Keratinocyte (primary cell): ENCODE measurements at regions of chr10 and their contacts with region 1.

Region 1: GRCh38 chr10:112314822-112315474 is 31.7 kb downstream of the TECTB start:
- DNase-seq: peak; percentile 9
- H3K4me3 ChIP-seq: no peak overlapping the region
- H3K27ac ChIP-seq: no peak overlapping the region
- H3K4me1 ChIP-seq: no peaks in the 10 kb centered on the region
- H3K27me3 ChIP-seq: no peaks in the 10 kb centered on the region
- CTCF ChIP-seq: peak; percentile 76 to 86 (median 85)

Region 2: DNA sequence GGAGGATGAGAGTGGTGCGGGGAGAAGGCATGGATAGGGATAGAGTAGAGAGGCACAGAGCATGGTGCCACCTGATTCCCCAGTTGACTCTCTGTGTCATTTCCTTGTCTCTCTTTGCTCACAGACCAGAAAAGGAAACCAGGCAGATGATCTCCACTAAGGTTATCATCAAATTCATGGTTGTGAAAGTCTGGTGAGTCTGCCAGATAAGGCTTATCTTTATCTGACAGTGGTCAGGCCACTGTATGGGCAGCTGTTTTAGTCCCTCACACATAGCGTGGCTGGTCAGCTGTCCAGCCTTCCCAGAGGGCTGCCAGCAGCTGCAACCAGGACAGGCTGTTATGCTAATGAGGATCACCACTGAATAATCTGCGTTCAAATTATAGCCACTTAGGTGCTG is 1139.2 kb before region 1 on chr10:
- dilution Hi-C with region 1: no loop called
- DNase-seq: no peak
- H3K4me3 ChIP-seq: no peak overlapping the region
- H3K27ac ChIP-seq: no peak overlapping the region
- H3K4me1 ChIP-seq: no peaks in the 10 kb centered on the region
- H3K27me3 ChIP-seq: no peaks in the 10 kb centered on the region
- CTCF ChIP-seq: no peak

Region 3: DNA sequence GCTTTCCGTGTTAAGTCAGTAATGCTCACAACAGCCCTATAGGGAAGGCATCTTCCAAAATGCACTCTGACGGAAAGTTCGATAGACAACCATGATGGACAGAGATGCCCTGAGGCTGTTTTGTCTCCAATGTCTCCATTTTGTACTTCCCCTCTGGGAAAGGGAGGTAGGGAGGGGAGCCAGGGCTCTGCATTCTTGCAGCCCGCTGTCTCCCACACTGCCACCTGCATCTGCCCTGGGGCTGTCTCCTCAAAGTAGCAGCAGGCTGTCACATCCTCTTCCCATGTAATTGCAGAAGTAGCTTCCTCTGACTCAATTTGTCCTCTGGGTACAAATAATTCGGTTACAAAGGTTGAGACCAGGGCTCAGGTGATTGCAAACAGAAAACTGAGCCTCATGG is 262.8 kb before region 1 on chr10:
- dilution Hi-C with region 1: no loop called
- DNase-seq: peak; percentile 40
- H3K4me3 ChIP-seq: no peak overlapping the region
- H3K27ac ChIP-seq: no peak overlapping the region
- H3K4me1 ChIP-seq: peaks cover 6% of the 10 kb centered on the region
- H3K27me3 ChIP-seq: no peaks in the 10 kb centered on the region
- CTCF ChIP-seq: no peak

Region 4: GRCh38 chr10:112140110-112140970 is 174.6 kb before region 1 on chr10:
- dilution Hi-C with region 1: no loop called
- DNase-seq: peak; percentile 40
- H3K4me3 ChIP-seq: no peak overlapping the region
- H3K27ac ChIP-seq: no peak overlapping the region
- H3K4me1 ChIP-seq: no peaks in the 10 kb centered on the region
- H3K27me3 ChIP-seq: no peaks in the 10 kb centered on the region
- CTCF ChIP-seq: peak; percentile 94 to 98 (median 95)

Region 5: DNA sequence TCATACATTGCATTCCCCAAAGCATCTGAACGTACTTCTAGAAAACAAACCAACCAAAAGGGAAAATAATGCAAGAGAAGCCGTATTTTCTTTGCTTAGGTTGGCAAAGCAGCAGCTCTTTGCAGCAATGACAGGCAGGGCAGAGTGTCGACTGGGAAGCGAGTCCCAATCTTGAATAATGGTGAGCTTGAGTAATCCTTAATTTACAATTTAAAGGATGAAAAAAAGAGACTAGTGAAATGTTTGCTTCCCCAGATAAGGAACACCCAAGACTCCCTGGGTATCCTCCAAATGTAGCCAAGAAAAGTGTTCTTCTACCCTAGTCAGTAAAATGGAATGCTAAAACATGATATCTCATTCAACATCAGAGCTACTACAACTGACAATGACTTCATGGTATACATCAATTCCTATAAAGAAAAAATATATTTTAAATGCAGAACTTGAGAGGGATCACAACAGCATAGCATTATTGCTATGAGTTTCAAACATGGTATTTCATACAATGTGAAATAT is 163.4 kb before region 1 on chr10:
- dilution Hi-C with region 1: loop called (anchors 25 kb)
- DNase-seq: no peak
- H3K4me3 ChIP-seq: no peak overlapping the region
- H3K27ac ChIP-seq: no peak overlapping the region
- H3K4me1 ChIP-seq: no peaks in the 10 kb centered on the region
- H3K27me3 ChIP-seq: no peaks in the 10 kb centered on the region
- CTCF ChIP-seq: no peak